B cell (primary cell): ENCODE measurements at regions of chr12 and their contacts with region 1.

Region 1: GRCh38 chr12:55996715-55997534 is at the start of gene SUOX:
- DNase-seq: peak; percentile 46
- ATAC-seq: peak; percentile 74
- H3K4me3 ChIP-seq: peak within 1 kb of the TSS; percentile 32 to 48 (median 41)
- H3K4me3 Mint-ChIP-seq: peak within 1 kb of the TSS; percentile 84
- H3K27ac ChIP-seq: no peak within 1 kb of the TSS
- H3K27ac Mint-ChIP-seq: peak within 1 kb of the TSS; percentile 71
- H3K4me1 ChIP-seq: peaks cover 13 to 18% of the 10 kb centered on the region in 2 donors
- H3K4me1 Mint-ChIP-seq: peaks cover 21% of the 10 kb centered on the region
- H3K27me3 ChIP-seq: peaks cover 0 to 4% (median 0%) of the 10 kb centered on the region in 4 experiments
- H3K27me3 Mint-ChIP-seq: no peaks in the 10 kb centered on the region
- CTCF ChIP-seq: no peak
- total RNA-seq, gene SUOX: 6.3 and 7.5 TPM in 2 replicates

Region 2: GRCh38 chr12:54870604-54871003 is 1126.3 kb before region 1 on chr12:
- CTCF ChIA-PET with region 1: no interaction called
- POLR2A ChIA-PET with region 1: no interaction called
- intact Hi-C with region 1: no loop called
- DNase-seq: no peak
- ATAC-seq: no peak
- H3K4me3 ChIP-seq: no peak overlapping the region
- H3K4me3 Mint-ChIP-seq: no peak overlapping the region
- H3K27ac ChIP-seq: no peak overlapping the region
- H3K27ac Mint-ChIP-seq: no peak overlapping the region
- H3K4me1 ChIP-seq: no peaks in the 10 kb centered on the region
- H3K4me1 Mint-ChIP-seq: no peaks in the 10 kb centered on the region
- H3K27me3 ChIP-seq: peaks cover 0 to 20% (median 6%) of the 10 kb centered on the region in 4 experiments
- H3K27me3 Mint-ChIP-seq: peaks cover 47% of the 10 kb centered on the region
- CTCF ChIP-seq: no peak

Region 3: GRCh38 chr12:55385911-55386310 is 611.0 kb before region 1 on chr12:
- CTCF ChIA-PET with region 1: no interaction called
- POLR2A ChIA-PET with region 1: no interaction called
- intact Hi-C with region 1: no loop called
- DNase-seq: no peak
- ATAC-seq: no peak
- H3K4me3 ChIP-seq: no peak overlapping the region
- H3K4me3 Mint-ChIP-seq: no peak overlapping the region
- H3K27ac ChIP-seq: no peak overlapping the region
- H3K27ac Mint-ChIP-seq: no peak overlapping the region
- H3K4me1 ChIP-seq: no peaks in the 10 kb centered on the region
- H3K4me1 Mint-ChIP-seq: no peaks in the 10 kb centered on the region
- H3K27me3 ChIP-seq: no peaks in the 10 kb centered on the region
- H3K27me3 Mint-ChIP-seq: peaks cover 7% of the 10 kb centered on the region
- CTCF ChIP-seq: no peak

Region 4: DNA sequence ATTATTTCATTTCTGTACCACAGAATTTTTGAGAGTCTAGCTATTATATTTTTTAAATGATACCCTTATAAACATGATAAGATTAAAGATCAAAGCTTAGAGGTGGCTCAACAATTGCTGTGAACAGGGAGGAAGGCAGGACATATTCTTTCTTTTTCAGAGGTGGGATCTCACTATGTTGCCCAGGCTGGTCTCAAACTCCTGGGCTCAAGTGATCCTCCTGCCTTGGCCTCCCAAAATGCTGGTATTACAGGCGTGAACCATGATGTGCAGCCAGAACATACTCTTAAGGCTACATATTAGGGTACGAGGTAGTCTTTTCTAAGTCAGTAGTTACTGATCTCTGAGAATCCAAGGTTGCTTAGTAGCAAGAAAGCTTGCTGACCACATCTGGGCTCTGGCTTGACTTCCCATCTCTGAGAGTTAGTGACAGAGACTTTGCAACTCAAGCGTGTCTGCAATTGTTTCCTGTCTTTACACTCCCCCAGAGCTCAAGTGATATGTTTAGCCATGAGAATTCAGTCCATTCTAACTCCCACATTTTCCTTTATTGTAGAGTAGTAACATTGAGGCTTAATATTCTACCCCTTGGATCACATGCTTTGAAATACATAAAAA is 14.5 kb before region 1 on chr12:
- CTCF ChIA-PET with region 1: interaction called, 19 read pairs
- POLR2A ChIA-PET with region 1: interaction called, 6 read pairs
- intact Hi-C with region 1: no loop called
- DNase-seq: peak; percentile 49
- ATAC-seq: peak; percentile 76
- H3K4me3 ChIP-seq: no peak overlapping the region
- H3K4me3 Mint-ChIP-seq: peak overlapping the region; percentile 18
- H3K27ac ChIP-seq: peak overlapping the region; percentile 3 to 60
- H3K27ac Mint-ChIP-seq: peak overlapping the region; percentile 44
- H3K4me1 ChIP-seq: peaks cover 23% of the 10 kb centered on the region in 2 donors
- H3K4me1 Mint-ChIP-seq: peaks cover 22% of the 10 kb centered on the region
- H3K27me3 ChIP-seq: no peaks in the 10 kb centered on the region
- H3K27me3 Mint-ChIP-seq: no peaks in the 10 kb centered on the region
- CTCF ChIP-seq: no peak

Region 5: GRCh38 chr12:56007564-56008559 is 10.9 kb after region 1 on chr12:
- CTCF ChIA-PET with region 1: interaction called, 18 read pairs
- POLR2A ChIA-PET with region 1: interaction called, 3 read pairs
- intact Hi-C with region 1: no loop called
- DNase-seq: peak; percentile 69
- ATAC-seq: peak; percentile 91
- H3K4me3 ChIP-seq: peak overlapping the region; percentile 31 to 81 (median 62)
- H3K4me3 Mint-ChIP-seq: peak overlapping the region; percentile 91
- H3K27ac ChIP-seq: peak overlapping the region; percentile 4 to 64
- H3K27ac Mint-ChIP-seq: peak overlapping the region; percentile 80
- H3K4me1 ChIP-seq: peaks cover 5 to 11% of the 10 kb centered on the region in 2 donors
- H3K4me1 Mint-ChIP-seq: peaks cover 14% of the 10 kb centered on the region
- H3K27me3 ChIP-seq: no peaks in the 10 kb centered on the region
- H3K27me3 Mint-ChIP-seq: no peaks in the 10 kb centered on the region
- CTCF ChIP-seq: no peak

Region 6: GRCh38 chr12:56029666-56030293 is 32.9 kb after region 1 on chr12:
- CTCF ChIA-PET with region 1: interaction called, 30 read pairs
- POLR2A ChIA-PET with region 1: no interaction called
- intact Hi-C with region 1: loop called (anchors 1 kb)
- DNase-seq: peak; percentile 56
- ATAC-seq: peak; percentile 51
- H3K4me3 ChIP-seq: no peak overlapping the region
- H3K4me3 Mint-ChIP-seq: no peak overlapping the region
- H3K27ac ChIP-seq: no peak overlapping the region
- H3K27ac Mint-ChIP-seq: no peak overlapping the region
- H3K4me1 ChIP-seq: no peaks in the 10 kb centered on the region
- H3K4me1 Mint-ChIP-seq: no peaks in the 10 kb centered on the region
- H3K27me3 ChIP-seq: no peaks in the 10 kb centered on the region
- H3K27me3 Mint-ChIP-seq: no peaks in the 10 kb centered on the region
- CTCF ChIP-seq: peak; percentile 71

Region 7: DNA sequence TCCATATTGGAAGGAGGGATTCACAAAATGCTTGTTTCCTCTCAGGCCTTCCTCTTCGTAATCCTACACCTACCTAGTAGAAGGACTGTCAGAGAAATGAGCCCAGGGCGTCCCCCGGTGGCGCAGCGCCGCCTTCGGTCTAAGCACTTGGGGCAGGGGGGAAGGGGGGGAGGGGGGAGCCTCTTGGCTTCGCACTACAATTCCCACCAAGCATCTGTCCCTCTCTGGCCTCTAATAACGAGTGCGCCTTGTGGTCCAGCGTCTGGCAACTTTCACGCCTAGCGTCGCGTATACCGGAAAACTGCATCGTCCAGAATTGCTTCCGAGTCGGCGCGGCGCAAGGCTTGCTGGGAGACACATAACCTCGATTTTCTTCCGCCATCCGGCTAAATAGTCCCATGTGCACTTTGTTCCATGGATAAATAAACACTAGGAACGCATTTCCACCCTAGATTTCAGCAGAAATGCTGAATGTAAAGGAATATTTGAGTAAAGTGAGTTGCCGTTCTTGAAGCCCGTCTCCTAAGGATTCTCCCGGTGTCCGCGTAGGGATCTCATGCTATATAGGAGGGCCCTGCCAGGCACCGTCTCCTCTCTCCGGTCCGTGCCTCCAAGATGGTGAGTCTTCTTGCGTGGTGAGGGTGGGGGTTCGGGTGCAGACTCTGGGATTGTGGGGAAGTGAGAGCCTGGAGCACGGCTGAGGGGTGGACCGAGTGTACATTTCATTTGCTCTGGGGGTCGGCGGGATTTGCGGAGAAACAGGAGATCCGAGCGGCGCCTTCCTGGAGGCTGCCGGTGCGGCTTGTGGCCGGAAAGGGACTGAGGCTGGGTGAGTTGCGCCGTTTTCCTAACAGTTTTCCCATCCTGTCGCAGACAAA is 44.9 kb after region 1 on chr12 and contains the start of gene RPS26:
- CTCF ChIA-PET with region 1: interaction called, 18 read pairs
- POLR2A ChIA-PET with region 1: interaction called, 6 read pairs
- intact Hi-C with region 1: loop called (anchors 1 kb)
- DNase-seq: peak; percentile 99
- ATAC-seq: peak; percentile 93
- H3K4me3 ChIP-seq: peak within 1 kb of the TSS; percentile 70 to 99 (median 91)
- H3K4me3 Mint-ChIP-seq: peak within 1 kb of the TSS; percentile 98
- H3K27ac ChIP-seq: peak within 1 kb of the TSS; percentile 82 to 90
- H3K27ac Mint-ChIP-seq: peak within 1 kb of the TSS; percentile 97
- H3K4me1 ChIP-seq: peaks cover 19 to 21% of the 10 kb centered on the region in 2 donors
- H3K4me1 Mint-ChIP-seq: peaks cover 24% of the 10 kb centered on the region
- H3K27me3 ChIP-seq: no peaks in the 10 kb centered on the region
- H3K27me3 Mint-ChIP-seq: no peaks in the 10 kb centered on the region
- CTCF ChIP-seq: peak; percentile 67
- total RNA-seq, gene RPS26: 19.4 and 21.0 TPM in 2 replicates

Region 8: GRCh38 chr12:56377310-56377988 is 380.5 kb after region 1 on chr12:
- CTCF ChIA-PET with region 1: no interaction called
- POLR2A ChIA-PET with region 1: no interaction called
- intact Hi-C with region 1: no loop called
- DNase-seq: no peak
- ATAC-seq: no peak
- H3K4me3 ChIP-seq: no peak overlapping the region
- H3K4me3 Mint-ChIP-seq: peak overlapping the region; percentile 76
- H3K27ac ChIP-seq: peak overlapping the region; percentile 75 to 80
- H3K27ac Mint-ChIP-seq: peak overlapping the region; percentile 96
- H3K4me1 ChIP-seq: peaks cover 49 to 64% of the 10 kb centered on the region in 2 donors
- H3K4me1 Mint-ChIP-seq: peaks cover 47% of the 10 kb centered on the region
- H3K27me3 ChIP-seq: no peaks in the 10 kb centered on the region
- H3K27me3 Mint-ChIP-seq: no peaks in the 10 kb centered on the region
- CTCF ChIP-seq: no peak

Region 9: DNA sequence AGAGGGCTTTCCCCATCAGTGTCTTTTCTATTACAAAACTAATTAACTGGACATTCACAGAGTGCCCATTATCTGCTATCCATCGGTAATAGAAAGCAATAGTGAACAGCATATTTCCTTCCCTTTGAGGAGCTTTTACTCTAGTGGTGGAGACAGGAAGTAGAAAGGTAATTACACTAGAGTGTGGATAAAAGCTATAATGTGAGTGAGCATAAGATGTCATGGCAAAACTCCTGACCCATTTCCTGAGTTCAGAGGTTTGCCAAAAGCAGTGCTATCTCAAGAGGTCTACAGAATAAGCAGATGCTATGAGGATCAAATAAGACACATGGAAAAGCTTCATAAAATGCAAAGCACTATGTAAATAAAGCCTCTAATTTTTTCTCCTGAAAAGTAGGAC is 428.3 kb after region 1 on chr12:
- CTCF ChIA-PET with region 1: no interaction called
- POLR2A ChIA-PET with region 1: no interaction called
- intact Hi-C with region 1: no loop called
- DNase-seq: no peak
- ATAC-seq: no peak
- H3K4me3 ChIP-seq: no peak overlapping the region
- H3K4me3 Mint-ChIP-seq: no peak overlapping the region
- H3K27ac ChIP-seq: no peak overlapping the region
- H3K27ac Mint-ChIP-seq: no peak overlapping the region
- H3K4me1 ChIP-seq: no peaks in the 10 kb centered on the region
- H3K4me1 Mint-ChIP-seq: no peaks in the 10 kb centered on the region
- H3K27me3 ChIP-seq: no peaks in the 10 kb centered on the region
- H3K27me3 Mint-ChIP-seq: no peaks in the 10 kb centered on the region
- CTCF ChIP-seq: no peak